Mammary epithelial cell (primary cell): ENCODE measurements at regions of chr11 and their contacts with region 1.

Region 1: GRCh38 chr11:46729110-46730027 is 10.4 kb downstream of the F2 start:
- DNase-seq: no peak
- H3K4me3 ChIP-seq: no peak overlapping the region
- H3K27ac ChIP-seq: no peak overlapping the region
- H3K4me1 ChIP-seq: no peaks in the 10 kb centered on the region
- H3K27me3 ChIP-seq: no peaks in the 10 kb centered on the region
- CTCF ChIP-seq: no peak

Region 2: GRCh38 chr11:46649180-46649738 is 80.1 kb before region 1 on chr11:
- CTCF ChIA-PET with region 1: no interaction called
- dilution Hi-C with region 1: loop called (anchors 5 kb)
- in situ Hi-C with region 1: no loop called
- intact Hi-C with region 1: no loop called
- DNase-seq: peak; percentile 65
- H3K4me3 ChIP-seq: no peak overlapping the region
- H3K27ac ChIP-seq: no peak overlapping the region
- H3K4me1 ChIP-seq: no peaks in the 10 kb centered on the region
- H3K27me3 ChIP-seq: no peaks in the 10 kb centered on the region
- CTCF ChIP-seq: no peak

Region 3: DNA sequence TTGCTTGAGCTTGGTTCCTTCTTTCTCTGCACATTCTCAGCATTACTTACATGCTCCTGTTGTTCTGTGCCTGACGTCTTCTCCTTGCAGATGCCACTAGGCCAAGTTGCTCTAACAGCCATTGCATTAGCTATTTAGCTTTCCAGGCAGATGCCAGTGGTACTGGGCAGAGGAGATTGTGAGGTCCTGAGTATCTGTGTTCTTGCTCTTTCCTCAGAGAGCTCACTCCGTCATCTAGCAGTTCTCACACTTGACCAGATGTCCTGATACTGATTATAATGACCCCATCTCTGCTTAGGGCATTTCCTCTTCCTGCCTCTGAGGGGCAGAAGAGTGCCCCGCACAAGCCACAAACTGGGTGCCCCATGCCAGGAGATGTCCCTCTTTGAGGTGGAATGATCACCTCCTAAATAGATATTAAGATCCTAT is 59.6 kb before region 1 on chr11:
- CTCF ChIA-PET with region 1: no interaction called
- dilution Hi-C with region 1: loop called (anchors 5 kb)
- in situ Hi-C with region 1: no loop called
- intact Hi-C with region 1: no loop called
- DNase-seq: no peak
- H3K4me3 ChIP-seq: no peak overlapping the region
- H3K27ac ChIP-seq: no peak overlapping the region
- H3K4me1 ChIP-seq: peaks cover 3% of the 10 kb centered on the region
- H3K27me3 ChIP-seq: no peaks in the 10 kb centered on the region
- CTCF ChIP-seq: peak; percentile 57 to 60